Adrenal gland (tissue), 19 donors: ENCODE measurements at regions of chr20 and their contacts with region 1.

Region 1: DNA sequence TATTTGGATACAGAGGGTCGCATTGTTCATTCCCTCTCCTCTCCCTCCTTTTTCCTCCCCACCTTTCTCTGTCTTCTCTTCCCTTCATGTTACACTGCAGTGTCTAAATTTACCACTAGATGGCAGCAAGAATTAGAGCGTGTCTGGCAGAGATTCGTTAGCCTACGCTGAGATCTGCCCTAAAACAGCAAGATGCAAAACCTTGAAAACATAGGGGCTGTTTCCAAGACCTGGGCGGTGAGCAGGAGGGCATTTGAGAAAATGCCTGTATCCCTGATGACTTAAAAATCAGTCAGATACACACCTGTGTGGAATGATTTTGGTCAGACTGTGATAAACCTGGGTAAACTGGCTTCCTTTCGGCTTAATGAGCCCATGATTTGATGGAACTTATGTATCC is 101.5 kb upstream of the ISM1 start:
- DNase-seq: peak; percentile 17 to 57 (median 34)
- H3K4me3 ChIP-seq: no peak overlapping the region
- H3K27ac ChIP-seq: no peak overlapping the region
- H3K4me1 ChIP-seq: no peaks in the 10 kb centered on the region
- H3K27me3 ChIP-seq: no peaks in the 10 kb centered on the region
- CTCF ChIP-seq: peak; percentile 67 to 89 (median 84)
- POLR2A ChIP-seq: no peak

Region 2: GRCh38 chr20:13546497-13547131 is 427.0 kb after region 1 on chr20:
- intact Hi-C with region 1: loop called in 1 of 2 experiments (anchors 10 kb)
- DNase-seq: peak; percentile 64 to 90 (median 78)
- H3K4me3 ChIP-seq: no peak overlapping the region
- H3K27ac ChIP-seq: no peak overlapping the region
- H3K4me1 ChIP-seq: no peaks in the 10 kb centered on the region
- H3K27me3 ChIP-seq: no peaks in the 10 kb centered on the region
- CTCF ChIP-seq: peak; percentile 61 to 78 (median 72)
- POLR2A ChIP-seq: no peak

Region 3: DNA sequence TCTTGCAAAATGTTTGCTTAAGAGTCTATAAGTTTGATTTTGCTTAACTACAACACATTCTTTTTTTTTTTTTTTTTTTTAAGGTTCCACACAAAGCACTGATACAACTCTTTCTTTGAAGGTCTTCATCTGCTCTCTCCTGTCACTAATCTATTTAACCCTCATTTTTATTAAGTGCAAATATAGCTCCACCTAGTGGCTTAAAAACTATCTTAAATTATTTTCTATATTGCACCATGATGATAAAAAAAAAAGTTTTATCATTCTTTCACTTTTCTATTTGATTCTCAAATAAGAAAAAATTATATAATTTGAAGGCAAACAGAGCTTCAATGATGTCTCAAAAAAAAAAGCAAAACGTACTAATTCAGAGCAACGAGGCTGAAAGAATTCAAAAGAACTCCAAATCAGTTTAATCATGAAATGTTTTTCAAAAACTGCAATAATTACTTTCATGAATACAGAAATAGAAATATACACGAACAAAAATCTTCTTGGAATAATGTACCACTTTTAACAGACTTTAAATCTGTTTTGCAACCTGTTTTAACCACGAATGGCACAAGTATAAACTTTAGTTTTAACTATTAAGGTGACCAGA is 652.4 kb after region 1 on chr20:
- intact Hi-C with region 1: loop called in 1 of 2 experiments (anchors 10 kb)
- DNase-seq: no peak
- H3K4me3 ChIP-seq: no peak overlapping the region
- H3K27ac ChIP-seq: no peak overlapping the region
- H3K4me1 ChIP-seq: peaks cover 2% of the 10 kb centered on the region in 2 donors
- H3K27me3 ChIP-seq: no peaks in the 10 kb centered on the region
- CTCF ChIP-seq: peak; percentile 32 to 65 (median 53)
- POLR2A ChIP-seq: no peak